ENCODE measurements at regions of chr12 and their contacts with region 1.

Region 1: DNA sequence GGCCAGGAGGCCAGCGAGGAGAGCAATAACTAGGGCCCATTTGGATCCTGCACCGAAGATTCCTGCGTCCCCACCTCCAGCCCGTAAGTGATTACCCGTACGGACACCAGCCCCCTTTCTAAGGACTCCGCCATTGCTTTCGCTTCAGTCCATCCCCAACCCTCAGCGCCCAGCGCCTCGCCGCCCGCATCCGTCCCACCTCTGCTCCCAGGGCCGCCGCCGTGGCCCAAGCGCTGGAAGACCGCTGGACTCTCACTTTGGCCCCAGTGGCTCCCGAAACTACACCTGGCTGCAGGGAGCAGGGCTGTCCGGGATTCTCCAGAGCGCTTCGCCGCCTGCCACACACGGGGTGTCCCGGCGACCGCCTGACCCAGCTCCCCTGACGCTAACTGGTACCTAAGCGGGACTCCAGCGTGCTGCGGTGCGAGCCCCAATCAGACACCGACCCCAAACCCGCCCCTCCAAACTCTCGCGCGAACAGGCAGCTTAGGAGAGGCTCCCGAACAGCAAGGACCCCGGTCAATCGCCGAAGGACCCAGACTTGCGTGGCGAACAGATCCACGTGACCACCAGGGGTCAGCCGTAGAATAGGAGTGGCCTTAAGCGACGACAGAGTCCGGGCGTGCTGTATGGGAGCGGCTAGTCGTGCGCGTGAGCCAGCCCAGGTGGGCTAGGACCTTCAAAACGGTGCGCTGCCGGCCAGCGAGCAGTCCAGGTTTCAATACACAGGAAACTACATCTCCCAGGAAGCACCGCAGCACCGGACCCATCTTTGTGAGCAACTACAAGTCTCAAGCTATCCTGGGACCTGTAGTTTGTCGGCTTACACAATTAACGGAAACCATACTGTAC is at the start of gene CNPY2:
- DNase-seq: peak; percentile 95
- ATAC-seq: peak; percentile 93
- H3K4me3 Mint-ChIP-seq: peak within 1 kb of the TSS; percentile 97
- H3K27ac Mint-ChIP-seq: peak within 1 kb of the TSS; percentile 95
- H3K4me1 Mint-ChIP-seq: peaks cover 18% of the 10 kb centered on the region
- H3K27me3 Mint-ChIP-seq: no peaks in the 10 kb centered on the region
- total RNA-seq, gene CNPY2: 77.4 to 82.6 TPM

Region 2: DNA sequence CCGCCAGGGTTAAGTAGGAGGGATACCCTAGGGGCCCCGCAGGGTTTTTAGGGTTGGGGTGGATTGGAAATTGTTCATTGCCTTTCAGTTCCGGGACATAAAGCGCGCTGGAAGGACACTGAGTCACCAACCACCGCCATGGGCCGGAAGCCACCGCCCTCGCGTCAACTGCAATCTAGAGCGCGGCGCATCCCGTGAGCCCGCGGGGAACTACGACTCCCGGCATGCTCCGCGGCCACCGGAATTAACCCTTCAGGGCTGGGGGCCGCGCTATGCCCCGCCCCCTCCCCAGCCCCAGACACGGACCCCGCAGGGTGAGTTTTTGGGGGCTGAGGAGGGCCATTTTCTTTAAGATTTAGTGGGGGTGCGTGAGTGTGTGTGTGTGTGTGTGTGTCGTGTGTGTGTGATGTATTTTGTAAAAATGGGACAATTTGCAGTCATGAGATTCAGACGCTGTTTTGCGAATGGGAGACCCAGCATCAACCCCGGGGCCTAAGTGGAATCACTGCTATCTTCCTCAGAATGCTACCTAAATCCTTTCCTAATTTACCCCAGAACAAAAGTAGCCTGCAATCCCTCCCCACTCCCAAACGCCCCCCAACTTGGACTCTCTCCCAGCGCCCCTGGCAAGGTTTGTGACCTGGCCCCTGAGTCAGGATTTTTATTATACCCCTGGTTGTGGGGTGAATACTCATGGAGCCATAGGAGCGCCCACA is 163.4 kb before region 1 on chr12 and contains the start of gene MYL6B:
- CTCF ChIA-PET with region 1: no interaction called
- POLR2A ChIA-PET with region 1: no interaction called
- intact Hi-C with region 1: loop called in 1 of 2 experiments (anchors 1 kb)
- DNase-seq: peak; percentile 98
- ATAC-seq: peak; percentile 92
- H3K4me3 Mint-ChIP-seq: peak within 1 kb of the TSS; percentile 88
- H3K27ac Mint-ChIP-seq: peak within 1 kb of the TSS; percentile 99
- H3K4me1 Mint-ChIP-seq: peaks cover 29% of the 10 kb centered on the region
- H3K27me3 Mint-ChIP-seq: no peaks in the 10 kb centered on the region
- total RNA-seq, gene MYL6B: 76.3 to 79.3 TPM

Region 3: GRCh38 chr12:56230432-56231183 is 85.2 kb before region 1 on chr12:
- CTCF ChIA-PET with region 1: no interaction called
- POLR2A ChIA-PET with region 1: no interaction called
- intact Hi-C with region 1: no loop called
- DNase-seq: no peak
- ATAC-seq: no peak
- H3K4me3 Mint-ChIP-seq: no peak overlapping the region
- H3K27ac Mint-ChIP-seq: no peak overlapping the region
- H3K4me1 Mint-ChIP-seq: peaks cover under 1% of the 10 kb centered on the region
- H3K27me3 Mint-ChIP-seq: no peaks in the 10 kb centered on the region

Region 4: GRCh38 chr12:56258057-56258819 is 57.6 kb before region 1 on chr12 and contains the start of gene ANKRD52:
- CTCF ChIA-PET with region 1: no interaction called
- POLR2A ChIA-PET with region 1: no interaction called
- intact Hi-C with region 1: loop called in 1 of 2 experiments (anchors 1 kb)
- DNase-seq: peak; percentile 90
- ATAC-seq: peak; percentile 92
- H3K4me3 Mint-ChIP-seq: peak within 1 kb of the TSS; percentile 83
- H3K27ac Mint-ChIP-seq: peak within 1 kb of the TSS; percentile 72
- H3K4me1 Mint-ChIP-seq: peaks cover 16% of the 10 kb centered on the region
- H3K27me3 Mint-ChIP-seq: no peaks in the 10 kb centered on the region
- total RNA-seq, gene ANKRD52: 29.2 to 31.0 TPM

Region 5: DNA sequence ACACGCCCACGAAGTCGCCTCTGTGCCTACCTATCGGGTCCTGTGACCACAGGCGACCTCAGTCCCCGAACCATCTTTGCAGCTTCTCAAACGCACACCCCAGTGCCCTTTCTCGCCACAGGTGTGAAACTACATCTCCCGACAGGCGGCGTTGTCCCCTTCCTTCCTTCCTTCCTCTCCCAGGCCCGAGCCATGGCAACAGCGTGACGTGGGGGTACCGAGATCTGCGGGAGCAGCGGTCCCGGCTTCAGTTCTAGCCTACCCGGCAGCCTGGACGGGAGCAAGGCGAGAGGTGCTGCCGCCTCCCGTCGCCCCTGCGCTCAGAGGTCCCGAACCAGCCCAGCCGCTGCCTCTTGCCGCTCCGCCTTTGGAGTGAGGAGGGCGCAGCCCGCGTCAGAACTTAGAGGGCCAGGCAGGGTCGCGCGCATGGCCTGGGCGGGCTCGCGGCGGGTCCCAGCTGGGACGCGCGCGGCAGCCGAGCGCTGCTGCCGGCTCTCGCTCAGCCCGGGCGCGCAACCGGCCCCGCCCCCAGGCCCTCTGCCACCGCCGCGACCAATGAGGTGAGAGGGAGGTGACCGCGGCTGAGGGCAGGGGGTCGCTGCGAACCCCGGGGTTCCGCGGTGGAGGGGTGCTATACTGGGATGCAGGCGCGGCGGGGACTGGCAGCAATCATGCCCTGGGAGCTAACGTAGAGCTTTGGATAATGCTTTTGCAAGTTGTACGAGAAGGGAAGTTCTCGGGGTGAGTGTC is 49.0 kb before region 1 on chr12 and contains the start of gene COQ10A:
- CTCF ChIA-PET with region 1: interaction called, 3 read pairs
- POLR2A ChIA-PET with region 1: interaction called, 3 read pairs
- intact Hi-C with region 1: loop called in 1 of 2 experiments (anchors 1 kb)
- DNase-seq: peak; percentile 90
- ATAC-seq: peak; percentile 90
- H3K4me3 Mint-ChIP-seq: peak within 1 kb of the TSS; percentile 89
- H3K27ac Mint-ChIP-seq: peak within 1 kb of the TSS; percentile 89
- H3K4me1 Mint-ChIP-seq: peaks cover 9% of the 10 kb centered on the region
- H3K27me3 Mint-ChIP-seq: no peaks in the 10 kb centered on the region
- total RNA-seq, gene COQ10A: 5.2 to 7.5 TPM

Region 6: GRCh38 chr12:56413392-56413791 is 97.5 kb after region 1 on chr12:
- CTCF ChIA-PET with region 1: no interaction called
- POLR2A ChIA-PET with region 1: no interaction called
- intact Hi-C with region 1: no loop called
- DNase-seq: no peak
- ATAC-seq: no peak
- H3K4me3 Mint-ChIP-seq: no peak overlapping the region
- H3K27ac Mint-ChIP-seq: no peak overlapping the region
- H3K4me1 Mint-ChIP-seq: no peaks in the 10 kb centered on the region
- H3K27me3 Mint-ChIP-seq: no peaks in the 10 kb centered on the region

Measured in activated CD4-positive, alpha-beta T cell treated with anti-CD3 and anti-CD28 coated beads for 36 hours (primary cell).